Transverse colon (tissue), 4 donors: ENCODE measurements at regions of chr9 and their contacts with region 1.

Region 1: GRCh38 chr9:125700791-125701190 is 6.2 kb downstream of the MAPKAP1 start:
- DNase-seq: no peak
- H3K4me3 ChIP-seq: no peak overlapping the region
- H3K27ac ChIP-seq: no peak overlapping the region
- H3K4me1 ChIP-seq: peaks cover 0 to 5% (median 3%) of the 10 kb centered on the region in 4 donors
- H3K27me3 ChIP-seq: no peaks in the 10 kb centered on the region
- CTCF ChIP-seq: no peak
- EP300 ChIP-seq: no peak
- POLR2A ChIP-seq: no peak

Region 2: GRCh38 chr9:125683486-125683885 is 17.3 kb before region 1 on chr9:
- in situ Hi-C with region 1: no loop called
- intact Hi-C with region 1: loop called (anchors 1 kb)
- DNase-seq: no peak
- H3K4me3 ChIP-seq: no peak overlapping the region
- H3K27ac ChIP-seq: no peak overlapping the region
- H3K4me1 ChIP-seq: no peaks in the 10 kb centered on the region
- H3K27me3 ChIP-seq: no peaks in the 10 kb centered on the region
- CTCF ChIP-seq: no peak
- EP300 ChIP-seq: no peak
- POLR2A ChIP-seq: no peak

Region 3: DNA sequence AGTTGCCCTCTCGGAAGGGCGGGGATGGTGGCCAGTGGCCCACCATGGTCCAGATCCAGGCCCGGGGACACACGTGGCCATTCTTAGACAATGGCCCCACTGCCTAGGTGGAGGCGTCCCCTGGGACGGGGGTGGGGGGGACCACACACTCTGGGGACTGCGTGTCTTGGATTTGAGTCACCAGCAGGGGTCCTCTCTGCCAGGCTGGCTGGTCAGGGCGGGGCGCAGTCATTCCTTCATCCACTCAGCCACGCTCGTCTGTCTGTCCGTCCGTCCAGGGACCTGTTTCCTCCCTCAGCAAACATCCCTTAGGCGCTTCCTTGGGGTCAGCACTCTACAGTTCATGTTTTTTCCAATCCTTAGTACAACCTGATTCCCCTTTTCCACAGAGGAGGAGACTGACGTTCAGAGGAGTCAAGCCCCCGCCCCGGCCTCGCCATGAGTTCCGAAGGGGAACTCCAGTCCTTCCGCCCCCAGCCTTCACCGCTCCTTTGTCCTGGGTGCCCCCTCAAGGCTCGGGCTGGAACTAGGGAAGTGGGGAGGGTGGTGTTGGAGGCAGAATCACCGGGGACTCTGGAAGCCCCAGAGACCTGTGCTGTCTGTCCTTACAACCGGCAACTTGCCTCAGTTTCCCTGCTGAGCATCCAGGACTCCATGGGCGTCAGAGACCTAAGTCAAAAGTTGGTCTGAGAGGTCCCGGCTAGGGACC is 349.3 kb after region 1 on chr9:
- in situ Hi-C with region 1: no loop called
- intact Hi-C with region 1: no loop called
- DNase-seq: no peak
- H3K4me3 ChIP-seq: no peak overlapping the region
- H3K27ac ChIP-seq: no peak overlapping the region
- H3K4me1 ChIP-seq: no peaks in the 10 kb centered on the region
- H3K27me3 ChIP-seq: peaks cover 6% of the 10 kb centered on the region
- CTCF ChIP-seq: no peak
- EP300 ChIP-seq: no peak
- POLR2A ChIP-seq: no peak